Activated CD4-positive, alpha-beta T cell treated with anti-CD3 and anti-CD28 coated beads, Interleukin-2, amount 10 ng/mL, durations not matched to agents 7 days and 5 days (primary cell): ENCODE measurements at regions of chr12 and their contacts with region 1.

Region 1: GRCh38 chr12:121668750-121669520 is 519 bp downstream of the MORN3 start:
- DNase-seq: peak; percentile 67
- H3K4me3 Mint-ChIP-seq: no peak overlapping the region
- H3K27ac Mint-ChIP-seq: peak overlapping the region; percentile 73
- H3K4me1 Mint-ChIP-seq: peaks cover 64% of the 10 kb centered on the region
- H3K27me3 Mint-ChIP-seq: no peaks in the 10 kb centered on the region

Region 2: GRCh38 chr12:121657305-121658008 is 11.5 kb before region 1 on chr12:
- CTCF ChIA-PET with region 1: interaction called, 13 read pairs
- POLR2A ChIA-PET with region 1: no interaction called
- DNase-seq: no peak
- H3K4me3 Mint-ChIP-seq: no peak overlapping the region
- H3K27ac Mint-ChIP-seq: peak overlapping the region; percentile 99
- H3K4me1 Mint-ChIP-seq: peaks cover 78% of the 10 kb centered on the region
- H3K27me3 Mint-ChIP-seq: no peaks in the 10 kb centered on the region

Region 3: DNA sequence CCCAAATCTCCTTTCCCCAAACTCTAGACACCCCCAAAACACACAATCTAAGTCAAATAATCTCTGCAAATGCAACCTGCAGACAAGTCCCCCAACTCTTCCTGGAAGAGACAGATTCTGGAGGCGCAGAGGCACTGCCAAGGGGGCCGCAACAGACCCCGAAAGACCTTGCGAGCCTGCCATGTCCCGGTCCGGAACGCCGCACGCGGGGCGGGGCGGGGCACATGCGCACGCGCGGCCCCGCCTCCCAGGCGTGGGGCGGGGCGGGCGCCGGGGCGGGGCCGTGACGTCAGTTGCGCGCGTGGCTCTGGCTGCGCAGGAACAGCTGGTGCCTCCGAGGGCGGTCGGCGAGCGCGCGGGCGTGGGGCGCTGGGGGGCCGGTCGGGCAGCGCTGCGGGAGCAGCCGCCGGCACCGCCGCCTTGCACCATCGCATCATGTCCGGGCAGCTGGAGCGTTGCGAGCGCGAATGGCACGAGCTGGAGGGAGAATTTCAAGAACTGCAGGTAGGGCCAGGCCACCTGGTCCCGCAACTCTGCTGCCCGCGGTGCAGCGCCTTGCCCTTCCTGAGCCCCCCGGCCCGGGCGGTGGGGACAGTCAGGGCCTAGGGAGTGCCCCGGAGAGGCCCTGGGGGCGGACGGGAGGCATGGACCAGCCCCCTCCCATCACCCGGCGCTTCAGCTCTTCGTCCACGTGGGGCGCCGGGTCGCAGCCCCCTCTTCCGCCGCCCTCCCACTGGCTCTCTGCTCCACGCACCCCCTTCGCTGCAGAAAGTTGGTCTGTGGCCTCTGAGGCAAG is 43.7 kb after region 1 on chr12 and contains the start of gene TMEM120B:
- CTCF ChIA-PET with region 1: no interaction called
- POLR2A ChIA-PET with region 1: no interaction called
- DNase-seq: peak; percentile 82
- H3K4me3 Mint-ChIP-seq: peak within 1 kb of the TSS; percentile 86
- H3K27ac Mint-ChIP-seq: peak within 1 kb of the TSS; percentile 93
- H3K4me1 Mint-ChIP-seq: peaks cover 23% of the 10 kb centered on the region
- H3K27me3 Mint-ChIP-seq: peaks cover 1% of the 10 kb centered on the region
- total RNA-seq, gene TMEM120B: 5.8 to 6.0 TPM

Region 4: DNA sequence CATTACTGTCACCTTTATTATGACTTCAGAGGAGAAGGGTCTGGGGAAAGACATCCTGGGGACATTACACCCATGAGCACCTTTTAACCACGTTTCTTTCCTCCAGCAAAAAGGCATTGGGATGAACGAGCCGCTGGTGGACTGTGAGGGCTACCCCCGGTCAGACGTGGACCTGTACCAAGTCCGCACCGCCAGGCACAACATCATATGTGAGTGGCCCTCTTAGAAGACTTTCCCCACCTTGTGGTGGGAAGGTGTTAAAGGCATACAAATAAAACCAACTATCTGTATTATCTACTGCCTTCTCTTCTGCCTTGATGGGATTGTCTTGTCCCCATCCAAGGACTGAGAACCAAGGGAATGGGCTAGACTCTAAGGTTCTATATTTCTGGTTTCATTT is 225.7 kb after region 1 on chr12:
- CTCF ChIA-PET with region 1: no interaction called
- POLR2A ChIA-PET with region 1: no interaction called
- DNase-seq: peak; percentile 22
- H3K4me3 Mint-ChIP-seq: no peak overlapping the region
- H3K27ac Mint-ChIP-seq: peak overlapping the region; percentile 80
- H3K4me1 Mint-ChIP-seq: peaks cover 41% of the 10 kb centered on the region
- H3K27me3 Mint-ChIP-seq: no peaks in the 10 kb centered on the region